Panc1 (cell line): ENCODE measurements at regions of chr11 and their contacts with region 1.

Region 1: DNA sequence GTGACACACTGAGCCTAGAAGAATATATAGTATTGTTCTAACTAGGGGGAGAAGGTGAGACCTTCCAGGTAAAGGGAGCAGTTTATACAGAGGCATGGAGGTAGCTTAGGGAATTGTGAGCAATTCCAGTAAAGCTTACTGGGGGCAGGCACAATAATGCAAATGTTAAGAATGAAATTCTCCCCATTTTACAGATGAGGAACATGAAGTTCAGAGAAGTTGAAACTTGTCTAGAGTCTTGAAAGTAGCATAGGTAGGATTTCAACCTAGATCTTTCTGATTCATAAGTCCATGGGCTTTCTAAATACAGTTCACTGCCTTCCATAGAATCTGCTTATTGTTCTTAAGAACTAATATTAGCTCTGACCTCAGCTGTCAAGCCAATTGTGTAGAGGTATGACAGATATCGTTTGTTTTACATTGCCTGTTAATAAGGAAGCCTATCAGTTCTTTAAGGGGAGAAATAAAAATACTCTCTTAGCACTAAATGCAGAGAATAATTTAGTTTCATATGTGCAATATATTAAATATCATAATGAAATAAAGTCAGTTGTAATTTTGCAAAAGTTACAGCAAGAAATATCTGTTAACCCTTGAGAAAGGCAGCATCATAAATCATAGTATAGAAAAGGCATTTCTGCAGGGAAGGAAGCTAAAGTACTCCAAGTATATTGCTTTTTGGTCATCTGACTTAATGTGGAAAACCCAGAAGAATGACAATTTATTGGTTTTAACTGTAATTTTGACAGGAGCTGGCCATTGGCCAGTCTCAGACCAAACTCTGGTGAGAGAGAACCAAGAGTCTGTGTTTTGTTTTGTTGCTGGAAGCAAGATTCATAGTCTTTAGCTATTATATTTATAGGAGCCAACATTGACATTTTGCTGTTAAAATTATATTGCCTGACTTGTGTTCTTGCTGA is 181.8 kb downstream of the UVRAG start:
- DNase-seq: no peak
- ATAC-seq: no peak
- H3K4me3 ChIP-seq: no peak overlapping the region
- H3K27ac ChIP-seq: no peak overlapping the region
- H3K4me1 ChIP-seq: no peaks in the 10 kb centered on the region
- H3K27me3 ChIP-seq: no peaks in the 10 kb centered on the region
- CTCF ChIP-seq: no peak

Region 2: DNA sequence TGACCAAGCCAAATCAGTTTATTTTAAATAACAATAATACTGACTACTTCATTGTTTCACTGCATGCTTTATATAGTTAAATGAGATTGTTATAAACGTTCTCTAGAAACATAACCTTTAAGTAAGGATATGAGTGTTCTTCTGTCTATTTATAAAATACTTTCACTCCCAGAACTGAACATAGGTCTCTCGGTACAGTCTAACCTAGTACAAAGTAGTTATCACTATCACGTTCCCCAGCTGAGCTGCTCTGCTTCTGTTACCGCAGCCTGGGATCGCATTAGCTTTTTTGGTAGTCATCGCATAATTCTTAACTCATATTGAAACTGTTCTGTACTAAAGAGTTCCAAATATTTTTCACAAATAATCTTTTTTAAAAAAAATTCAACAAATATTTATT is 66.0 kb after region 1 on chr11:
- CTCF ChIA-PET with region 1: no interaction called
- POLR2A ChIA-PET with region 1: no interaction called
- in situ Hi-C with region 1: loop called (anchors 5 kb)
- intact Hi-C with region 1: no loop called
- DNase-seq: no peak
- ATAC-seq: no peak
- H3K4me3 ChIP-seq: no peak overlapping the region
- H3K27ac ChIP-seq: no peak overlapping the region
- H3K4me1 ChIP-seq: no peaks in the 10 kb centered on the region
- H3K27me3 ChIP-seq: no peaks in the 10 kb centered on the region
- CTCF ChIP-seq: no peak